Esophagus muscularis mucosa (tissue), 4 donors: ENCODE measurements at regions of chr12 and their contacts with region 1.

Region 1: DNA sequence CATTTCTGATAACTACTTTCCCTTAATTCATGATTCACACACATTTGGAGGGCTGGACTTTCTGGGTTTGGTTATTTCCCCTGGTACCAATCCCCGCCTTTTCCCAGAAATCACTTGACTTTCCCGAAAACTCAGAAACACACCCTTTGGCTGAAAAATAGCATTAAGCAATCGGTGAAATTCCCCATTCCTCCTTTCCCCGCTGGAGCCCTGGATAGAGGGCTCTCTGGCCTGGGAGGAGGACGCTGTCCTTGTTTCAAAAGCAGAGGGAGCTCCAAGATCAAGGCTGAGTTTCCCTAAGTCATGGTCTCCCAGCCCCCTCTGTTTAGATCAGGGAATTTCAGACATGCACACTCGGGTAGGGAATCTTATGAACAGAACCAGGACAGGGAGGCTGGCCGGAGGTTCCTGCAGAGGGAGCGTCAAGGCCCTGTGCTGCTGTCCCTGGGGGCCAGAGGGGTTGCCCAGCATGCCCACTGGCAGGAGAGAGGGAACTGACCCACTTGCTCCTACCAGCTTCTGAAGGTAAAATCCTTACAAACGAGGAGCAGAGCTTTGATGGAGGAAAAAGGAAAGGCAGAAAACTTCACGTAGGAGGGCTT is at the start of gene C1S:
- DNase-seq: peak; percentile 95
- H3K4me3 ChIP-seq: peak within 1 kb of the TSS; percentile 44 to 68 (median 54)
- H3K27ac ChIP-seq: peak within 1 kb of the TSS; percentile 79 to 89 (median 82)
- H3K4me1 ChIP-seq: peaks cover 14 to 74% (median 63%) of the 10 kb centered on the region in 4 donors
- H3K27me3 ChIP-seq: no peaks in the 10 kb centered on the region
- CTCF ChIP-seq: peak; percentile 88 to 98 (median 96)
- EP300 ChIP-seq: peak; percentile 79
- POLR2A ChIP-seq: peak; percentile 67
- total RNA-seq, gene C1S: 454 to 549 (median 512) TPM

Region 2: DNA sequence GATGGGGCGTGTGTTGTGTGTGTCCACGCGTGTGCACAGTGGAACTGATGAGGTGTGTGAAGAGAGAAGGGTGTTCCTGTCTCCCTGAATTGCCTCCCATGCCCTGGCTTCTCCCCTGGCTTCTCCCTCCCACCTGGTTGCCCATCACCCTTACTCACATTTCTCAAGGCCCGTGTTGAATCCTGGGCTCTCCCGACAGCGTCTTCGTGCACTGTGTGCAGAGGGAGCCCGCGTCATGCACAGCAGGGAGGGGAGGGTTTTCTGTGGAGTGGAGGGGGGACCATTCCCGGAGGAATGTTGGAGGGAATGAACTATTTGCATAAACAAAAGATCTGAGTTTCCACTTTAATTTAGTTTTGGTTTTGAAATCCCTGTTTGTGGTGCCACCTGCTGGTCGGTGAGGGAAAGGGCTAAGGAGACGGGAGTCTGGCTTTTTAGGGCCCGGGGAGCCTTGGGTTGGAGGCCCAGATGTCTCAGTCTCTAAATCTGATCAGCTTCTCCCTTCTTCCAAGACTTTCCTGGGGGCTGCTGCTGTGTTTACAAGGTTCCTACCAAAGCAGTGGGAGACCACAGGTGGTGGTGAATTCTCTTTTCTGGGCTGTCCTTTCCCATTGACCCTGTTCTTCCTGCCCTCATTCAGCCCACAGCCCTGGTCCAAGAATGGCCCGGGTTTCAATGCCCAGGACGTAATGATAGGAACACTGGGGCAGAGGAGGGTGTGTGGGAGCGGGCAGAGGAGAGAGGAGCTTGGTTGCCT is 32.0 kb after region 1 on chr12 and contains the start of gene C1R:
- intact Hi-C with region 1: loop called (anchors 1 kb)
- DNase-seq: peak; percentile 96
- H3K4me3 ChIP-seq: peak within 1 kb of the TSS; percentile 53 to 75 (median 61)
- H3K27ac ChIP-seq: peak within 1 kb of the TSS; percentile 81 to 88 (median 85)
- H3K4me1 ChIP-seq: peaks cover 19 to 61% (median 54%) of the 10 kb centered on the region in 4 donors
- H3K27me3 ChIP-seq: no peaks in the 10 kb centered on the region
- CTCF ChIP-seq: peak; percentile 91 to 95 (median 94)
- EP300 ChIP-seq: no peak
- POLR2A ChIP-seq: peak; percentile 68
- total RNA-seq, gene C1R: 324 to 603 (median 572) TPM